Calu3 (cell line): ENCODE measurements at regions of chr2 and their contacts with region 1.

Region 1: GRCh38 chr2:223957092-223957851 is at the start of gene MRPL44:
- DNase-seq: peak; percentile 99
- H3K4me3 Mint-ChIP-seq: peak within 1 kb of the TSS; percentile 96
- H3K27ac Mint-ChIP-seq: peak within 1 kb of the TSS; percentile 94
- H3K4me1 Mint-ChIP-seq: peaks cover 32% of the 10 kb centered on the region
- H3K27me3 Mint-ChIP-seq: no peaks in the 10 kb centered on the region
- CTCF ChIP-seq: no peak
- total RNA-seq, gene MRPL44: 32.7 and 39.5 TPM in 2 replicates

Region 2: GRCh38 chr2:223692191-223692947 is 264.9 kb before region 1 on chr2:
- CTCF ChIA-PET with region 1: no interaction called
- intact Hi-C with region 1: loop called (anchors 10 kb)
- DNase-seq: peak; percentile 63
- H3K4me3 Mint-ChIP-seq: no peak overlapping the region
- H3K27ac Mint-ChIP-seq: no peak overlapping the region
- H3K4me1 Mint-ChIP-seq: peaks cover 38% of the 10 kb centered on the region
- H3K27me3 Mint-ChIP-seq: no peaks in the 10 kb centered on the region
- CTCF ChIP-seq: peak; percentile 55

Region 3: DNA sequence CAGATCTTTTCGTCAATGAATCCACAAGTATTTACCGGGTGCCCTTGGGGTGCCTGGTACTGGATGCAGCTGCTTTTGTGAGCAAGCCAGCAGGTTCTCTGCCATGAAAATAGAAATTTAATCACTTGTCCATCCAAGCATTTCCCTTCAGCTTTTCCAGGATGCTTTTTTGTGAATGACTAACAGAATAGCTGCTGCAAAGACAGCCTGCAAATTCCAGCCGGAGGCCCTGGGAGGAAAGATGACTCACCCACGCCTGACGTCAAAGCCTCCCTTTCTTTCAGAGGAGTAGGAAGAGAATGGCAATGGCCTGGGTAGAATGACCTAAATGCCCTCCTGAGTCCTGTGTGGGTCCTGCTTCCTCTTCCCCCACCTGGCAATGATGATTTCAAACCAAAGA is 231.8 kb before region 1 on chr2:
- CTCF ChIA-PET with region 1: no interaction called
- intact Hi-C with region 1: no loop called
- DNase-seq: peak; percentile 87
- H3K4me3 Mint-ChIP-seq: peak overlapping the region; percentile 23
- H3K27ac Mint-ChIP-seq: peak overlapping the region; percentile 76
- H3K4me1 Mint-ChIP-seq: peaks cover 54% of the 10 kb centered on the region
- H3K27me3 Mint-ChIP-seq: no peaks in the 10 kb centered on the region
- CTCF ChIP-seq: no peak

Region 4: GRCh38 chr2:223896833-223897311 is 60.4 kb before region 1 on chr2:
- CTCF ChIA-PET with region 1: no interaction called
- intact Hi-C with region 1: loop called (anchors 5 kb)
- DNase-seq: no peak
- H3K4me3 Mint-ChIP-seq: no peak overlapping the region
- H3K27ac Mint-ChIP-seq: no peak overlapping the region
- H3K4me1 Mint-ChIP-seq: peaks cover 22% of the 10 kb centered on the region
- H3K27me3 Mint-ChIP-seq: no peaks in the 10 kb centered on the region
- CTCF ChIP-seq: no peak

Region 5: GRCh38 chr2:224837558-224837957 is 880.3 kb after region 1 on chr2:
- CTCF ChIA-PET with region 1: no interaction called
- intact Hi-C with region 1: no loop called
- DNase-seq: no peak
- H3K4me3 Mint-ChIP-seq: no peak overlapping the region
- H3K27ac Mint-ChIP-seq: no peak overlapping the region
- H3K4me1 Mint-ChIP-seq: no peaks in the 10 kb centered on the region
- H3K27me3 Mint-ChIP-seq: no peaks in the 10 kb centered on the region
- CTCF ChIP-seq: no peak